K562 (cell line): ENCODE measurements at regions of chr19 and their contacts with region 1.

Region 1: GRCh38 chr19:42881229-42881628 is 1.7 kb upstream of the PSG1 start:
- DNase-seq: peak; percentile 9 to 31 (median 22)
- ATAC-seq: no peak
- H3K4me3 ChIP-seq: no peak overlapping the region
- H3K27ac ChIP-seq: no peak overlapping the region
- H3K4me1 ChIP-seq: no peaks in the 10 kb centered on the region
- H3K27me3 ChIP-seq: no peaks in the 10 kb centered on the region
- CTCF ChIP-seq: peak; percentile 44 to 53 (median 53); a peak in 4 of 6 replicates
- EP300 ChIP-seq: no peak
- POLR2A ChIP-seq: no peak
- RAD21 ChIP-seq: no peak

Region 2: DNA sequence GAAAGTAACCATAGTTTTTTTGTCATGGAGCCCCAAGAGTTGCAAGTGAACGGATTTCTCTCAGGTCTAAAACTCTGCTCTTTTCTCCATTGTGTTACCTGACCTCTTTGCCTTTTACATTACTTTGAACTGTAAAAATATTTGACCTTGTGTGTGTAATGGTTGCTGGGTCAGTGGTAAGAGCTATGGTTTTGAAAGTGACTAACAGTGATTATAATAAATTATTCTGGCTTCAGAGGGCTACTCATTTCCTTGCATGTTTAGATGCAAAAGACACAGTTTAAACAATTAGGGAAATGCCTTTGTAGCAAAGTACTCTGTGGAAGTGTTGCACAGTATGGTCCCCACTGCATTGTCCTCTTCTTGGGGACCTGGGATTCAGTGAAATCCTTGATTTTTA is 86.5 kb before region 1 on chr19:
- CTCF ChIA-PET with region 1: no interaction called
- POLR2A ChIA-PET with region 1: no interaction called
- in situ Hi-C with region 1: no loop called
- intact Hi-C with region 1: loop called (anchors 10 kb)
- DNase-seq: no peak
- ATAC-seq: no peak
- H3K4me3 ChIP-seq: no peak overlapping the region
- H3K27ac ChIP-seq: no peak overlapping the region
- H3K4me1 ChIP-seq: no peaks in the 10 kb centered on the region
- H3K27me3 ChIP-seq: no peaks in the 10 kb centered on the region
- CTCF ChIP-seq: no peak
- EP300 ChIP-seq: no peak
- POLR2A ChIP-seq: no peak
- RAD21 ChIP-seq: no peak

Region 3: GRCh38 chr19:42831271-42832019 is 49.8 kb before region 1 on chr19:
- CTCF ChIA-PET with region 1: no interaction called
- POLR2A ChIA-PET with region 1: no interaction called
- in situ Hi-C with region 1: no loop called
- intact Hi-C with region 1: no loop called
- DNase-seq: no peak
- ATAC-seq: no peak
- H3K4me3 ChIP-seq: no peak overlapping the region
- H3K27ac ChIP-seq: no peak overlapping the region
- H3K4me1 ChIP-seq: no peaks in the 10 kb centered on the region
- H3K27me3 ChIP-seq: no peaks in the 10 kb centered on the region
- CTCF ChIP-seq: no peak
- EP300 ChIP-seq: no peak
- POLR2A ChIP-seq: no peak
- RAD21 ChIP-seq: no peak